Right ventricle myocardium inferior (tissue), 1 donor: ENCODE measurements at regions of chr18 and their contacts with region 1.

Region 1: GRCh38 chr18:70072678-70073077 is 125.0 kb upstream of the CD226 start:
- DNase-seq: no peak
- ATAC-seq: no peak

Region 2: GRCh38 chr18:69636529-69637301 is 436.0 kb before region 1 on chr18:
- intact Hi-C with region 1: loop called (anchors 5 kb)
- DNase-seq: no peak
- ATAC-seq: peak; percentile 80

Region 3: GRCh38 chr18:69845593-69846506 is 226.8 kb before region 1 on chr18:
- intact Hi-C with region 1: loop called (anchors 5 kb)
- DNase-seq: no peak
- ATAC-seq: peak; percentile 46

Region 4: DNA sequence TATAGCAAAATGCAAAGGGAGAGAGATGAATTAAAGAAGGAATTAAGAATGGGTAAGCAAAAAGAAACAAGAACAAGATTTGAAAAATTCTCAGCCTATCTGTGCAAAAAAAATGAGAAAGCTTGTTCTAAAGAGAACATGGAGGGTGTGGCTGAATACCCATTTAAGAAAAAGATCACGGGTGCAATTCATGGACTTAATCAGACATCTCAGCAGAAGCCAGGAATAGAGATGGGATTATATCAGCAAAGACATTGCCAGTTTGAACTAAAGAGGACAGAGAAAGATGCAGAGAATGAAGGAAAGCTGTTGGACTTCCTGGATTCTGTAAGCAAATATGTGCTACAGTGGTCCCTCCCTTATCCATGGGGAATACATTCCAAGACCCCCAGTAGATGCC is 17.2 kb after region 1 on chr18:
- intact Hi-C with region 1: no loop called
- DNase-seq: no peak
- ATAC-seq: no peak